ENCODE measurements at regions of chr10 and their contacts with region 1.

Region 1: GRCh38 chr10:51960494-51960895 is 261.1 kb upstream of the CSTF2T start:
- DNase-seq: no peak
- ATAC-seq: no peak
- H3K4me3 Mint-ChIP-seq: no peak overlapping the region
- H3K27ac Mint-ChIP-seq: no peak overlapping the region
- H3K4me1 Mint-ChIP-seq: no peaks in the 10 kb centered on the region
- H3K27me3 Mint-ChIP-seq: no peaks in the 10 kb centered on the region
- CTCF ChIP-seq: peak; percentile 43

Region 2: DNA sequence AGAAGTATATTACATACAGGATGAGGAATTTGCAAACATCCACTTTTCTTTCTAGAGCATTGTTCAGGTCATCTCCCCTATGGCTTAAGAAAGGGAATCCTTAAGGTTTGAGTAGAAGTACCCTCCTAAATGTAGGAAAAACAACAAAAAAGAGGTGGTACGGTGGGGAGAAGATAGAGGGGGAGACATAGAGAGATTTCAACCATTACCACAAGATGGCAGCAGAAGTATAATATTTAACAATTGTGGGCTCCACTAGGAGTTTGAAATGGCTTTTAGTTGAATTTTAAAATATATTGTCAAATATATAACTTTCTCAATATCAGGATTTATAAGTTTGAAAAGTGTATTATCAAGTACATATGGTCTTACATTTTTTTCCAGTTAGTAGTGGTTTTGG is 958.9 kb before region 1 on chr10:
- CTCF ChIA-PET with region 1: interaction called, 3 read pairs
- POLR2A ChIA-PET with region 1: no interaction called
- intact Hi-C with region 1: loop called (anchors 1 kb)
- DNase-seq: no peak
- ATAC-seq: no peak
- H3K4me3 Mint-ChIP-seq: no peak overlapping the region
- H3K27ac Mint-ChIP-seq: no peak overlapping the region
- H3K4me1 Mint-ChIP-seq: no peaks in the 10 kb centered on the region
- H3K27me3 Mint-ChIP-seq: peaks cover 3% of the 10 kb centered on the region
- CTCF ChIP-seq: no peak

Region 3: DNA sequence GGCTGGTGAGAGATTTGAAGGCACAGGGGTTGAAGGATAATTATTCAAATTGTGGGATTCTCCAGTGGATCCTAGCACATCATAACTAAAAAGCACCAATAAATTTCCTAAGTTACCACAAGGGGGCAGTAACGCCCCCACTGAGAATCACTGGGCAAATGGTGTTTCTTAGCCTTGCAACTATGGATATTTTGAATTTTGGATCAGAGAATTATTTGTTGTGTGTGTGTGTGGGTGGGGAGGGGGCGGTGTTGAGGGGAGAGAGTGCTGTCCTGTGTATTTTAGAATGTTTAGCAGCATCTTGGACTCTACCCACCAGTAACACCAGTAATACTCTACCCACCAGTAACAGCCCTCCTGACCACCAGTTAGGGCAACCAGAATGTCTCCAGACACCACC is 949.5 kb before region 1 on chr10:
- CTCF ChIA-PET with region 1: interaction called, 3 read pairs
- POLR2A ChIA-PET with region 1: no interaction called
- intact Hi-C with region 1: loop called (anchors 1 kb)
- DNase-seq: no peak
- ATAC-seq: no peak
- H3K4me3 Mint-ChIP-seq: no peak overlapping the region
- H3K27ac Mint-ChIP-seq: no peak overlapping the region
- H3K4me1 Mint-ChIP-seq: peaks cover 16% of the 10 kb centered on the region
- H3K27me3 Mint-ChIP-seq: peaks cover 5% of the 10 kb centered on the region
- CTCF ChIP-seq: no peak

Region 4: GRCh38 chr10:51063659-51064535 is 896.6 kb before region 1 on chr10:
- CTCF ChIA-PET with region 1: no interaction called
- POLR2A ChIA-PET with region 1: no interaction called
- intact Hi-C with region 1: loop called (anchors 2 kb)
- DNase-seq: no peak
- ATAC-seq: no peak
- H3K4me3 Mint-ChIP-seq: no peak overlapping the region
- H3K27ac Mint-ChIP-seq: no peak overlapping the region
- H3K4me1 Mint-ChIP-seq: no peaks in the 10 kb centered on the region
- H3K27me3 Mint-ChIP-seq: no peaks in the 10 kb centered on the region
- CTCF ChIP-seq: no peak

Region 5: DNA sequence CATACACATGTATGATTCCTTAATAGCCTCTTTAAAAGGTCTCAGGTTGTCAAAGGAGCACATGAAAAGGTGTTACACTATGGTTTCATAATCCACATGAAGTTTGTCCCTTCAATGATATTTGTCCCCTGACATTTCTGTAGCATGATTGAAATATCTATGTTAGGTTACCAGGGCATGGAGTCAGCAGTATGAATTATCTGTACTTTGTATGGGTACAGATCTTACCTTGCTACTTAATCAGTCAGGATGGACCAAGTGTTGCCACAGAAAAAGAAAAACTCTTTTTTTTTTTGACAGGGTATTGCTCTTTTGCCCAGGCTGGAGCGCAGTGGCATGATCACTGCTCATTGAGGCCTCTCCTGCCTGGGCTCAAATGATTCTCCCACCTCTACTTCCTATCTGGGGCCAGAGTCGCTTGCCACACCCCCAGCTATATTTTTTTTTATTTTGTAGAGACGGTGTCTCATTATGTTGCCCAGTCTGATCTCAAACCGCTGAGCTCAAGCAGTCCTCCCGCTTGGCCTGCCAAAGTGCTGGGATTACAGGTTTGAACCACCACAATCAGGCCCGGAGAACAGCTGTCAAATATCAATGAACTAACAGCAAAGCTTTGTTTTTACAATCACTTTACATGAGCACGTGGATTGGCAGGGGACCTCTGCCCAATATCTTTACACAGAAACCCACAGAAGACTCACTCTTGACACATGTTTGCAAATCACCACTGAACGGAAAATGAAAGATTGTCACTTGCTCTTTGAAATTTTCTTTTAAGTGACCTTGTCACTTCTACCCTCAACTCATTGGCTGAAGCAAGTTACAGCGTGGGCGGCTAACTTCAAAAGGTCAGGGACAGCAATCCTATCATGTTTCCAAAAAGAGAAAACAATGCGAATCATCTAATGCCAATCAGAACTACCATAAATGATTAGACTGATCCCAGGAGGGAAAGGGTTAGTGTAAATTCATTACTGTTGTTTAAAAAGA is 746.0 kb before region 1 on chr10:
- CTCF ChIA-PET with region 1: no interaction called
- POLR2A ChIA-PET with region 1: no interaction called
- intact Hi-C with region 1: no loop called
- DNase-seq: no peak
- ATAC-seq: no peak
- H3K4me3 Mint-ChIP-seq: no peak overlapping the region
- H3K27ac Mint-ChIP-seq: no peak overlapping the region
- H3K4me1 Mint-ChIP-seq: no peaks in the 10 kb centered on the region
- H3K27me3 Mint-ChIP-seq: no peaks in the 10 kb centered on the region
- CTCF ChIP-seq: no peak

Region 6: DNA sequence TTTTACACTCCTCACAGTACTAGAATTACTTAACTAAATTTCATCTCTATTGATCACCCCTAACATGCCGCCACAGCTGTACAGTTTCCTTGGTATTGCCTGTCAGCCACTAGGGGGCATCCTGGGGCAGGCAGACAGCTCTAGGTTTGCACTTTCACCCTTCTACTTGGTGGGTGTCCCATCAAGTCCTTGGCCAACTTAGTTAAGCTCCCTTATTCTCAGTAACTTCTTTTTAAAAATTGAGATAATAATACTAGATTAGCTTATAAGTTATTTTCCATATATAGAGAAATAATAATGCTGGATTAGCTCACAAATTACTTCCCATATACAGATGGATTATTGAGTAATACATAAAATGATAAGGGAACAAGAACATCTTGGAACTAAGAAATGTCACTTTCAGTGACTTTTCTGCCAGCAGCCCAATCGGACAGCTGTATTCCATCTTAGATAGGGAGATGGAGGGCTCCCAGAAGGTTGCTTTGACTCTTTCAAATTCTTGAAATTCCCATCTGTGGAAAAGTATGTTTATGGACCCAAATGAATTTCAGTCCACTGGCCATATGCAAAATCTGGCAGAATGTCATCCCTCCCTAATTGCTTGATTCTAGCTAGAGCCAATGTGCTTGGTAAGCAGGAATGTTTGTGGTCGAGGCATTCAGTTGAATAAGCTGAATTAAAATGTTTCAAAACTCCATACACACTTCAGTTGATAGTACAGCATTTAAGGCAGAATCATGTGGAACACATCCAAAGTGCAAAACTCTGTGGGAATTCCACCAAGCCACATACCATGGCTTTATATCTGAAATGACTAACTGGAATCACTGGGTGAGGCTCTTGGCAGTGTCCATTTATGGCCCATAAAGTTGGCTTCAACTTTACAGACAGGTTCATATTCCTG is 570.8 kb before region 1 on chr10:
- CTCF ChIA-PET with region 1: interaction called, 25 read pairs
- POLR2A ChIA-PET with region 1: no interaction called
- intact Hi-C with region 1: loop called (anchors 1 kb)
- DNase-seq: no peak
- ATAC-seq: peak; percentile 42
- H3K4me3 Mint-ChIP-seq: no peak overlapping the region
- H3K27ac Mint-ChIP-seq: no peak overlapping the region
- H3K4me1 Mint-ChIP-seq: no peaks in the 10 kb centered on the region
- H3K27me3 Mint-ChIP-seq: no peaks in the 10 kb centered on the region
- CTCF ChIP-seq: no peak

Region 7: DNA sequence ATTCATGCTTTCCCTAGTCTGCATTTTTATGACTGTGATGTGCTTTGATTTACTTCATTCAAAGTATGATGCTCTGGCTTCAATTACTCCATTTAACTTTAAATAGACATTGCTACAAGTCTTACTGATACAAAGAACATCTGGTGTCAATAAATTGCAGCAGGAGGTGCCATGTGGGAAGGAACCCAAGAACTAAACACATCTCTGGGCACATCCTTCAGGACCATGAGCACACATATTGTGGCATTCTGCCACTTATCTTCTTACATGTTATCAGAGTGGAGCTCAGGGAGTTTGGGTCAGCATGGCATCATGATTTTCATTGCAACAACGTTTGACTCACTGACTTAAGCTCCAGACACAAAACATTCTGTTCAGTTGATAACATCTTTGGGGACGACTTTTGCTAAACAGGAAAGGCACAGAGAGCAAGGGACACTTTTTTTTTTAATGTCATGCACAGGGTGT is 580.5 kb after region 1 on chr10:
- CTCF ChIA-PET with region 1: no interaction called
- POLR2A ChIA-PET with region 1: no interaction called
- intact Hi-C with region 1: no loop called
- DNase-seq: no peak
- ATAC-seq: no peak
- H3K4me3 Mint-ChIP-seq: no peak overlapping the region
- H3K27ac Mint-ChIP-seq: no peak overlapping the region
- H3K4me1 Mint-ChIP-seq: no peaks in the 10 kb centered on the region
- H3K27me3 Mint-ChIP-seq: no peaks in the 10 kb centered on the region
- CTCF ChIP-seq: no peak

Measured in activated B cell treated with CpG ODN at 0.5 μM for 24 hours (primary cell).